ENCODE measurements at regions of chr12 and their contacts with region 1.

Region 1: DNA sequence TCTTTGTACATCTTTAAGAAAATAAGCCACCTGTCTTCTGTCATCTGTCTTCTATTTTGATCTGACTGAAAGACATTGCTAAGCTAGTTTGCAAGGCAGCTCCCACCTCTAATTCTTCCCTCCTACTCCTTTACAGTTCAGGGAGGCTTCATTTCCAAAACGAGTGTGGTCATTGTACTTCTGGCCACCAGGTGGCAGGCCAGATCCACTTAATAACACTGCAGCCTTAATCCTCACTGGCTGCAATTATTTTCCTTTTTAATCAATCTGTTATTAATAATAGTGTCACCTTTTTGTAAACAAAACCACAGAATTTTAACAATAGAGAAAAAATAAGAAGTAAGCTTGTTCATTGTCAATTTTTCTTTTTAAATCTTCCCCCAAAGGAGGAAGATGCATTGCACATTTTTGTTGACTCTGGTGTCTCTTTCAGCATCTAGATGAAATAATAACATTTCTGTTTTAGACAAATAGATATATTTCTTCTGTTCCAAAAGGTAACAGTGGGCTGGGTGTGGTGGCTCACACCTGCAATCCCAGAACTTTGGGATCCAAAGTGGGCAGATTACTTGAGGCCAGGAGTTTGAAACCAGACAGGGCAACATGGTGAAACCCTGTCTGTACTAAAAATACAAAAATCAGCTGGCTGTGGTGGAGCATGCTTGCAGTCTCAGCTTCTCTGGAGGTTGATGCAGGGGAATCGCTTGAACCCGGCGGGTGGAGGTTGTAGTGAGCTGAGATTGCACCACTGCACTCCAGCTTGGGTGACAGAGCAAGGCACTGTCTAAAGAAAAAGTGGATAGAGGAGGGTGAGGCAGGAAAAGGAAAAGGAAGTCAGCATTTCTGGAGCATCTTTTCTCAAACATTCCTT is 23.3 kb downstream of the GABARAPL1 start:
- DNase-seq: peak in 40 of 42 donors; percentile 22 to 85 (median 60)

Region 2: DNA sequence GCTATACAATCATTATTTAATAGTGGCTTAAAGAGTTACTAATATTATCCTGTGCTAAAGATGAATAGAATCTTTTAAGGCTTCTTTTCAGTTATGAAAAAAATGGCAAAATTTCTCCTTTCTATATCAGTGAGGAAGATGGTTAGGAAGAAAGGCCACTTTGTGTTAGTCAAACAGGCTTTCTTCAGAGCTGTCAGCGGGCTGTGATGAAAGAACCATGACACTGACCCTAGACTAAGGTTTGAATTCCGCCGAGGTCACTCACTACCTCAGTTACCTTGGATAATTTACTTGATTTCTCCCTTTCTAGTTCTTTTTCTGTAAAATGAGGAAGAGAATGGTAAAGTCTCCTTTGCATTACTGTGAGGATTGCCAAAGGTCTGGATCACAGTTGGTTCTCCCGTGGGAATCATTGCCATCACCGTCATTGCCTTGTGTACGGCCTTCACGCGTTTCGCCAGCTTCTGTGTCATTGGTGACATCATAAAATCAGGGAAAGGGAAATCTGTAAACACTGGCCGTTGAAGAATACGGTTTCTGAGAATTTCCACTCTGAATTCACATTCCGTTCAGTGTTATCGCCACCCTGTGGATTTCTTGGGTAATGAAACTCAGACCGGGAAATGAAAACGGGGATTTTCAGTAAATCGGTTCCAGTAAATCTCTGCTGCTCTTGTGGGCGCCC is 513.8 kb after region 1 on chr12:
- intact Hi-C with region 1: loop called (anchors 10 kb)
- DNase-seq: peak; percentile 31 to 93 (median 78)